A673 (cell line): ENCODE measurements at regions of chr9 and their contacts with region 1.

Region 1: GRCh38 chr9:28407351-28407750 is 834.1 kb upstream of the C9orf72 start:
- DNase-seq: no peak
- H3K4me3 ChIP-seq: no peak overlapping the region
- H3K27ac ChIP-seq: no peak overlapping the region
- H3K4me1 ChIP-seq: no peaks in the 10 kb centered on the region
- H3K27me3 ChIP-seq: no peaks in the 10 kb centered on the region
- CTCF ChIP-seq: no peak

Region 2: GRCh38 chr9:28464481-28465216 is 57.3 kb after region 1 on chr9:
- CTCF ChIA-PET with region 1: no interaction called
- POLR2A ChIA-PET with region 1: no interaction called
- intact Hi-C with region 1: loop called (anchors 10 kb)
- DNase-seq: peak; percentile 72
- H3K4me3 ChIP-seq: no peak overlapping the region
- H3K27ac ChIP-seq: no peak overlapping the region
- H3K4me1 ChIP-seq: peaks cover 11% of the 10 kb centered on the region
- H3K27me3 ChIP-seq: no peaks in the 10 kb centered on the region
- CTCF ChIP-seq: no peak

Region 3: GRCh38 chr9:28503573-28503972 is 96.2 kb after region 1 on chr9:
- CTCF ChIA-PET with region 1: no interaction called
- POLR2A ChIA-PET with region 1: no interaction called
- intact Hi-C with region 1: no loop called
- DNase-seq: peak; percentile 22
- H3K4me3 ChIP-seq: no peak overlapping the region
- H3K27ac ChIP-seq: no peak overlapping the region
- H3K4me1 ChIP-seq: no peaks in the 10 kb centered on the region
- H3K27me3 ChIP-seq: no peaks in the 10 kb centered on the region
- CTCF ChIP-seq: no peak